HEK293 (cell line): ENCODE measurements at regions of chr1 and their contacts with region 1.

Region 1: DNA sequence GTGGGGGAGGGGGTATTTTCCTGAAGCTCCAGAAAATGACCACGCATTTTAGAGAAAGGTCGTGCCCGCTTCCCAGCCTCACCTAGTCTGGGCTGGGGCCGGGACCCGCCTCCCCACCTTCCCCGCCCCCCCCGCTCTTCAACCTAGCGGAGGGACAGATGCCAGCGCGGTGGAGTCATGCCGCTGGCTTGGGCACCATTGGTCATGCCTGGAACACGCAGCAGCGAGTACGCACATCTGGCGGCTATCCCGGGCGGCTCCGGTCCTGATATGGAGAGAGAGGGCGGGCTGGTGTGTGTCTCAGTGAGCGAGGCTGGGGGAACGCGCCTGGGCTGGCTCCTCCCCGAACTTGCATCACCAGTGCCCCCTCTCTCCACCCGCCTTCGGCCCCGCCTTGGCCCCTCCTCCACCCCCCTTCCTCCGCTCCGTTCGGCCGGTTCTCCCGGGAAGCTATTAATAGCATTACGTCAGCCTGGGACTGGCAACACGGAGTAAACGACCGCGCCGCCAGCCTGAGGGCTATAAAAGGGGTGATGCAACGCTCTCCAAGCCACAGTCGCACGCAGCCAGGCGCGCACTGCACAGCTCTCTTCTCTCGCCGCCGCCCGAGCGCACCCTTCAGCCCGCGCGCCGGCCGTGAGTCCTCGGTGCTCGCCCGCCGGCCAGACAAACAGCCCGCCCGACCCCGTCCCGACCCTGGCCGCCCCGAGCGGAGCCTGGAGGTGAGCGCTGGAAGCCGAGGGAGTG is at the start of gene ATF3:
- H3K4me3 ChIP-seq: peak within 1 kb of the TSS; percentile 82
- H3K27ac ChIP-seq: peak within 1 kb of the TSS; percentile 78
- H3K4me1 ChIP-seq: peaks cover 14% of the 10 kb centered on the region
- CTCF ChIP-seq: peak; percentile 15; the same call in 1 of the 2 replicates

Region 2: GRCh38 chr1:212421165-212421564 is 187.2 kb before region 1 on chr1:
- CTCF ChIA-PET with region 1: no interaction called
- POLR2A ChIA-PET with region 1: no interaction called
- H3K4me3 ChIP-seq: no peak overlapping the region
- H3K27ac ChIP-seq: no peak overlapping the region
- H3K4me1 ChIP-seq: no peaks in the 10 kb centered on the region
- CTCF ChIP-seq: no peak

Region 3: GRCh38 chr1:212477014-212477679 is 131.2 kb before region 1 on chr1:
- CTCF ChIA-PET with region 1: interaction called, 11 read pairs
- POLR2A ChIA-PET with region 1: interaction called, 67 read pairs
- H3K4me3 ChIP-seq: no peak overlapping the region
- H3K27ac ChIP-seq: no peak overlapping the region
- H3K4me1 ChIP-seq: no peaks in the 10 kb centered on the region
- CTCF ChIP-seq: peak; percentile 73

Region 4: DNA sequence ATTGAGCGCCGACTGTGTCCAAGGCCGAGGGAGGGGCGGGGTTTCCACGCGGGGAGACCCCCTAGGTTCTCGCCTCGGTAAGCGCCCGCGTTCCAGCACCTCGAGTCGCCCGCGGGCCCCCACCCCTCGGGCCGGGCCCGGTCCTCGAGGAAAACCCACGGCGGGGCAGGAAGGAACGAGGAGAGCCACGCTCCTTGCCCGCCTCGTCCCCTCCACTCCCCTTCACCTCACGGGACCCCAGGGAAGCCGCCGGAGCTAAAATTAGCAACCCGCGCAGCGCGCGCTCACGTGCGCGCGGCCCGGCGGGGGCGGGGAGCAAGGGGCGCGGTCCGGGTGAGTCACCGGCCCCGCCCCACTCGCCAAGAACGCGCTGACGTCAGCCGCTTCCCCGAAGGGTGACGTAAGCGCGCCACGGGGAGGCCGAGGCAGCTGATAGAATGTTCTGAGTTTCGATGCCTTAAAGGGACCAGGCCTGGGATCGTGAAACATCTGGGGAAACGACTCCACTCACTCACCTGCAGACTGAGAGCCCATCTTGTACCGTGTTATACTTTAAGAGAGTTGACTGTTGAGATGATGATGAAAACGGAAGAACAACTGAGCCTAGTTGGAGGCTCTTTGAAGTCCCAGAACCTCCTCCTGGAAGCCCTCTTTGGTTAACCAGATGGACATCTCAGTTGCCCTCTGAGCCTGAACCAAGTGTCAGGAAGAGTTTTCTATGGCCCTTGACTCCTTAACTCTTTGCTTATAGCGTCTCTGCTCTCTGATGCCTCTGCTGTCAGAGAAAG is 49.5 kb before region 1 on chr1:
- CTCF ChIA-PET with region 1: no interaction called
- POLR2A ChIA-PET with region 1: interaction called, 26 read pairs
- H3K4me3 ChIP-seq: peak overlapping the region; percentile 61
- H3K27ac ChIP-seq: peak overlapping the region; percentile 47; the same call in 1 of the 2 replicates
- H3K4me1 ChIP-seq: no peaks in the 10 kb centered on the region
- CTCF ChIP-seq: no peak

Region 5: GRCh38 chr1:212587888-212588510 is 20.4 kb before region 1 on chr1:
- CTCF ChIA-PET with region 1: interaction called, 3 read pairs
- POLR2A ChIA-PET with region 1: interaction called, 11 read pairs
- H3K4me3 ChIP-seq: no peak overlapping the region
- H3K27ac ChIP-seq: no peak overlapping the region
- H3K4me1 ChIP-seq: peaks cover 8% of the 10 kb centered on the region; the same call in 1 of the 2 replicates
- CTCF ChIP-seq: no peak

Region 6: GRCh38 chr1:212641956-212642355 is 33.6 kb after region 1 on chr1:
- CTCF ChIA-PET with region 1: no interaction called
- POLR2A ChIA-PET with region 1: interaction called, 13 read pairs
- H3K4me3 ChIP-seq: no peak overlapping the region
- H3K27ac ChIP-seq: no peak overlapping the region
- H3K4me1 ChIP-seq: peaks cover 3% of the 10 kb centered on the region; the same call in 1 of the 2 replicates
- CTCF ChIP-seq: no peak

Region 7: DNA sequence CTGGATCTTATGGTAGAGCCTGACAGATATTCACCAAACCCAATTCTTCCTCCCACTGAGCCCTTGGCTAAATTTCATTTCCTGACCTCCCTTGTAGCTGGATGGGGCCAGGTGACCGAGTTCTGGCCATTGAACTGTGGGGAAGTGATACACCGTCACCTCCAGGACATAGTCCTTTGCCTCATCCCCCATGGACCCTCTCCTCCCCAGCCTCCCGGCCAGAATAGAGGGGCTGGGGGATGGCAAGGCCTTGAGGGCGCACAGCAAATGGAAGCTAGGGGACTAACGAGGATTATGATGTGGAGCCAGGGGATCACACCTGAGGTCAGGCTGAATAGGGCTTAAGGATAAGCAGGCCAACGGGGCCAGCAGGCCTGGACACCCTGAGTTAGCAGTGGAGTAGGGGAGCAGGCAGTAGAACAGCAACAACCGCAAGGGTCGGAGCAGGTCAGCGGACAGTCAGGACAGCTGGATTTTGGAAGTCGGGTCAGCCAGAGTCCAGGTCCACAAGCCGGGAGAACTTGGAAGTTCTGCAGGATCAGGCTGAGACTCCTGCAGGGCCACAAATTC is 76.2 kb after region 1 on chr1:
- CTCF ChIA-PET with region 1: no interaction called
- POLR2A ChIA-PET with region 1: no interaction called
- H3K4me3 ChIP-seq: no peak overlapping the region
- H3K27ac ChIP-seq: no peak overlapping the region
- H3K4me1 ChIP-seq: no peaks in the 10 kb centered on the region
- CTCF ChIP-seq: no peak

Region 8: DNA sequence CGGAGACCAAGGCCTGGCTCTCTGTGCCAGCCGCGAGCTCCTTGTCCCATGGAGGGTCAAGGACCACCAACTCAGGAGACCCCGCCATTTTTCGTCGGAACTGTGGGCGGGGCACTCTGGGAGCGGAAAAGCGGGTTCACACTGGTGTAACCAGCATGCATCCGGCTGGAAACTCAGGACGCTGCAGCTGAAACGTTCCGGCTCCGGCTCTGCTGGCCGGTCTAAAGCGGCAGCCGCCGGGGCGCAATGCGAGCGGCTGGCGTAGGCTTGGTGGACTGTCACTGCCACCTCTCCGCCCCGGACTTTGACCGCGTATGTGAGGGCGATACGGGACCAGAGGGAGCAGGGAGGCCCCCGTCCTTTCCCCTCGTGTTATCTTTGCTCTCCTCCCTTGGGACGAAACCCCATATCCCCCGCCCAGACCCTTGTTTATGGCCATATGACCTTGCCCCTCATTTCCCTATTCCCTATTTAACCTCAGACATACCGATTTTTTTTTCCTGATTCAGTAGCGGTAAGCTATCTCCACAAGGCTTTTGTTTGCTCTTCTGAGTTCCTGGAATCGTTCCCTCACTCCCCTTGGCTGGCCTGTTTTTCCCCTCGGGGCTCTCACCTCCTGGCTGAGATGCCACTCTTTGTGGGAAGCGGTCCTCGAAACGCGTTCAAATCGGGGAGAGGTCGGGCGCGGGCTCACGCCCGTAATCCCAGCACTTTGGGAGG is 183.5 kb after region 1 on chr1 and contains the starts of genes NSL1 and TATDN3:
- CTCF ChIA-PET with region 1: no interaction called
- POLR2A ChIA-PET with region 1: interaction called, 14 read pairs
- H3K4me3 ChIP-seq: peak within 1 kb of the TSS; percentile 100
- H3K27ac ChIP-seq: peak within 1 kb of the TSS; percentile 55
- H3K4me1 ChIP-seq: no peaks in the 10 kb centered on the region
- CTCF ChIP-seq: peak; percentile 63

Region 9: GRCh38 chr1:212987702-212988322 is 379.4 kb after region 1 on chr1:
- CTCF ChIA-PET with region 1: no interaction called
- POLR2A ChIA-PET with region 1: no interaction called
- H3K4me3 ChIP-seq: no peak overlapping the region
- H3K27ac ChIP-seq: no peak overlapping the region
- H3K4me1 ChIP-seq: no peaks in the 10 kb centered on the region
- CTCF ChIP-seq: no peak